ENCODE measurements at regions of chr6 and their contacts with region 1.

Region 1: GRCh38 chr6:32971581-32972352 is 3.4 kb downstream of the BRD2 start:
- DNase-seq: peak; percentile 98 to 100 (median 100)
- ATAC-seq: peak; percentile 50 to 68
- H3K4me3 Mint-ChIP-seq: peak overlapping the region; percentile 78 to 99 (median 99)
- H3K27ac Mint-ChIP-seq: peak overlapping the region; percentile 91 to 100 (median 100)
- H3K4me1 Mint-ChIP-seq: peaks cover 30 to 57% (median 44%) of the 10 kb centered on the region in 4 donors
- H3K27me3 Mint-ChIP-seq: peaks cover 0 to 2% (median 0%) of the 10 kb centered on the region in 5 donors

Region 2: DNA sequence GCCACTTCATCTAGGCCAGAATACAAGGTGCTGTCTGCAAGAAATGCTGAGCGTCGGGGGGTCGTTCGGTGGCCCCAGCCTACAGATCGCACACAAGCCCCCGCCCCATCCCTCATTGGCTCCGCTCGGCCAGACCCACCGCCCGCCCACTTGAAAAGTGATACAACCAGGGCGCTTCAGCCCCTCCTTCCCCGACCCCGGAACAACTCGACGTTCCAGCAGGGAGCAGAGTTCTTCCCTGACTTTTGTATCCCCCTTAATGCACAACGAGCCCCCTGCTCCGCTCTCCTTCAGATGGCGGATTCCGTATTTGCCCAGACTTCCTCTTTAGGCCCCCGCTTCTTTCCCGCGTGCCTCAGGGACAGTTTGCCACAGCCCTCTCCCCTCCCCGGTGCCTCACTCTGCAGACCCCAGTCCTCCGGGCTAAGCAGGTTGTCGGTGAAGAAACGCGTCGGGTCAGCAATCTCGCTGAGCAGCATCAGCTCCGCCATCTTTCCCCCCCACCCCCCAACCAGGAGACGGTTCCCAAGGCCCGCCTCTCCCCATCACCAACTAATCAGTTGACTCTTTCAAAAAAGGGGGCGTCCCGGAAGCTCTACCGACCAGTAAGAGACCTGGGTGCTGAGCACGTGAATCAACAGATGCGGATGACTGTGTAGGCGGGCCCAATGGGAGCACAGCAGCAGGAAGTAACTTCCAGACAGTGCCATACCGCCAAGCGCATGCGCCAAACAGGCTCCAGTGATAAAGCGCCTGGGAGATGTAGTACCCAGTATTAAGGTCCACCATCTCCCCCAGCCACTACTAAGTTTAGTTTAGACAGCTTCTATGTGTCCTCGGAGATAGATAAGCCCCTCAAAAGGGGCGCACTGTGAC is 843.8 kb before region 1 on chr6 and contains the start of gene ATF6B:
- POLR2A ChIA-PET with region 1: interaction called, 10 read pairs
- DNase-seq: peak; percentile 86 to 99 (median 97)
- ATAC-seq: peak; percentile 95 to 96
- H3K4me3 Mint-ChIP-seq: peak within 1 kb of the TSS; percentile 96 to 100 (median 98)
- H3K27ac Mint-ChIP-seq: peak within 1 kb of the TSS; percentile 90 to 99 (median 97)
- H3K4me1 Mint-ChIP-seq: peaks cover 26 to 62% (median 57%) of the 10 kb centered on the region in 4 donors
- H3K27me3 Mint-ChIP-seq: no peaks in the 10 kb centered on the region
- polyA plus RNA-seq, gene ATF6B: 17.5 to 25.7 (median 21.4) TPM

Region 3: DNA sequence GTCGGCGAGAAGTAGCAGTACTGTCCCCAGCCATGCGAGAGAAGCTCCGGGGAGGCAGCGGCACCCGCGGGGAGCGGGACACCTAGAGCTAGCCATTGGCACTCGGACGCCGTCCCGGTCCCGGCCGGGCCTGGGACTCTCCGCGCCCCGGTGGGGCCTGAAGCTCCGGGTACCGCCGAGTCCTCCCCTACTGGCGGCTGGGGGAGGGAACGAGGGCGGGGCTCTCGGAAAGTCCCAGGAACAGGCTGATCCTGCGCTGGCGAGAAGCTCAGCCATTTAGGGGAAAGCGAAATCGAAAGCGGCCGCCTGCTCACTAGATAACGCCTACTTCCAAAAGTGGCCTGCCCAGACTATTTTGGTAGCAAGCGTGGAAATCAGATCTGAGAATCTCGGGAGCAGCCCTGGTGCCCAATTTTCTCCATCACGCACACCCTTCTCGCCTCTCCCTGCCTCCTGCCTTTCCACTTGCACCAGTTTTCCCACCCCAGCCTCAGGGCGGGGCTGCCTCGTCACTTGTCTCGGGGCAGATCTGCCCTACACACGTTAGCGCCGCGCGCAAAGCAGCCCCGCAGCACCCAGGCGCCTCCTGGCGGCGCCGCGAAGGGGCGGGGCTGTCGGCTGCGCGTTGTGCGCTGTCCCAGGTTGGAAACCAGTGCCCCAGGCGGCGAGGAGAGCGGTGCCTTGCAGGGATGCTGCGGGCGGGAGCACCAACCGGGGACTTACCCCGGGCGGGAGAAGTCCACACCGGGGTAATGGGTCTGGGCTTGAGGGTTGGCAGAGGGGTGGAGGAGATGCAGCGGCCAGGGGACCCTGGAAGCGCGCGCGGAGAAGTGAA is 118.0 kb before region 1 on chr6 and contains the starts of genes PSMB9 and TAP1:
- POLR2A ChIA-PET with region 1: interaction called, 108 read pairs
- DNase-seq: peak; percentile 88 to 99 (median 92)
- ATAC-seq: peak; percentile 82 to 83
- H3K4me3 Mint-ChIP-seq: peak within 1 kb of the TSS; percentile 90 to 100 (median 98)
- H3K27ac Mint-ChIP-seq: peak within 1 kb of the TSS; percentile 98 to 100 (median 100)
- H3K4me1 Mint-ChIP-seq: peaks cover 46 to 76% (median 72%) of the 10 kb centered on the region in 4 donors
- H3K27me3 Mint-ChIP-seq: no peaks in the 10 kb centered on the region
- polyA plus RNA-seq, gene PSMB9: 402 to 432 (median 424) TPM
- polyA plus RNA-seq, gene TAP1: 197 to 283 (median 230) TPM

Region 4: DNA sequence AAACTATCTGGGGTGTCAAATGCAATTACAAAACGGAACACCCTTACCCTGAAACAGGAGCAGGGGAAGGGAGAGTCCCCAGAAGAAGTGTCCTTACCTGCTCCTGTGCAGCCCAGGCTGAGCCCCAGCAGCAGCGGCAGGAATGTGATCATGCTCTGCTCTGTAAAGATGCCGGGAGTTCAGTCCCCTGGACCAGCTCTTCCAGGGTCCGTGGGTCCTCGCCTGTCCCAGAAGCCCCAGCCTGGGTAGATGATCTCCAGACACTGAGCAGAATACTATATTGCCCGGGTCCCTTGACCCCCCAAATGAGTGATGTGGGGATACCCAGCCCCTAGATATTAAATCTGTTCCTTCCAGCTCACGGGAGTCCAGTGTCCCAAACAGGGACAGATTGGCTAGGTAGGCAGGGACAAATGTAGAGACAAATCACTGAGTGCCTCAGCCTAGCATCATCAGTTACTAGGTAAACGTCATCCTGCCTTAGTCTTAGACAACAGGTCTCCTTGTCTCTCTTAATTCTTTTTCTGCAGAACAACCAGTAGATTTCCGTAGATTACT is 31.0 kb before region 1 on chr6 and contains the start of gene HLA-DMB:
- POLR2A ChIA-PET with region 1: interaction called, 510 read pairs
- DNase-seq: peak in 9 of 10 donors; percentile 42 to 80 (median 63)
- ATAC-seq: peak; percentile 83 to 85
- H3K4me3 Mint-ChIP-seq: peak within 1 kb of the TSS; percentile 84 to 97 (median 94)
- H3K27ac Mint-ChIP-seq: peak within 1 kb of the TSS; percentile 88 to 98 (median 97)
- H3K4me1 Mint-ChIP-seq: peaks cover 43 to 92% (median 64%) of the 10 kb centered on the region in 4 donors
- H3K27me3 Mint-ChIP-seq: no peaks in the 10 kb centered on the region
- polyA plus RNA-seq, gene HLA-DMB: 10.8 to 22.5 (median 16.8) TPM

Region 5: GRCh38 chr6:33008944-33009861 is 37.4 kb after region 1 on chr6 and contains the start of gene HLA-DOA:
- POLR2A ChIA-PET with region 1: interaction called, 12 read pairs
- DNase-seq: peak; percentile 38 to 83 (median 70)
- ATAC-seq: peak; percentile 98
- H3K4me3 Mint-ChIP-seq: peak within 1 kb of the TSS; percentile 87 to 99 (median 96)
- H3K27ac Mint-ChIP-seq: peak within 1 kb of the TSS; percentile 90 to 98 (median 95)
- H3K4me1 Mint-ChIP-seq: peaks cover 27 to 34% (median 29%) of the 10 kb centered on the region in 4 donors
- H3K27me3 Mint-ChIP-seq: no peaks in the 10 kb centered on the region
- polyA plus RNA-seq, gene HLA-DOA: 26.4 to 61.0 (median 33.2) TPM

Region 6: DNA sequence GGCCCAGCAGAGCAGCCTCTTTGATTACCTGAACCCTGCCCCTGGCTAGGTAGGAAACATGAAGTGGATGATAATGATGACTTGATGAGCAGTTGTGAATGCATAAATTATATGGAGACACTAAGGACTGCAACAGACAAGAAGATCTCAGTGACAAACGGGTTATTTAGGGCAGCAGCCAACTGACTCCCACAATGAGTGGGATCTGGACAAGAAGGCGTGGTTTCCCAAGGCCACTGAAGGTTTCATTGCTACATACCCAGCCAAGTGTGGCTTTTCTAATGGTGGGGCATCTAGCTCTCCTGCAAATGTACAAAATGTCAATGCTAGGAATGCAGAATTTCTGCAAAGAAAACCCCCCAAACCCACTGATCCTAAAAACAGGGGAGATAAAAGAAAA is 266.0 kb after region 1 on chr6:
- POLR2A ChIA-PET with region 1: no interaction called
- DNase-seq: no peak
- ATAC-seq: no peak
- H3K4me3 Mint-ChIP-seq: no peak overlapping the region
- H3K27ac Mint-ChIP-seq: no peak overlapping the region
- H3K4me1 Mint-ChIP-seq: peaks cover 7 to 13% (median 10%) of the 10 kb centered on the region in 4 donors
- H3K27me3 Mint-ChIP-seq: peaks cover 2 to 26% (median 11%) of the 10 kb centered on the region in 5 donors

Region 7: DNA sequence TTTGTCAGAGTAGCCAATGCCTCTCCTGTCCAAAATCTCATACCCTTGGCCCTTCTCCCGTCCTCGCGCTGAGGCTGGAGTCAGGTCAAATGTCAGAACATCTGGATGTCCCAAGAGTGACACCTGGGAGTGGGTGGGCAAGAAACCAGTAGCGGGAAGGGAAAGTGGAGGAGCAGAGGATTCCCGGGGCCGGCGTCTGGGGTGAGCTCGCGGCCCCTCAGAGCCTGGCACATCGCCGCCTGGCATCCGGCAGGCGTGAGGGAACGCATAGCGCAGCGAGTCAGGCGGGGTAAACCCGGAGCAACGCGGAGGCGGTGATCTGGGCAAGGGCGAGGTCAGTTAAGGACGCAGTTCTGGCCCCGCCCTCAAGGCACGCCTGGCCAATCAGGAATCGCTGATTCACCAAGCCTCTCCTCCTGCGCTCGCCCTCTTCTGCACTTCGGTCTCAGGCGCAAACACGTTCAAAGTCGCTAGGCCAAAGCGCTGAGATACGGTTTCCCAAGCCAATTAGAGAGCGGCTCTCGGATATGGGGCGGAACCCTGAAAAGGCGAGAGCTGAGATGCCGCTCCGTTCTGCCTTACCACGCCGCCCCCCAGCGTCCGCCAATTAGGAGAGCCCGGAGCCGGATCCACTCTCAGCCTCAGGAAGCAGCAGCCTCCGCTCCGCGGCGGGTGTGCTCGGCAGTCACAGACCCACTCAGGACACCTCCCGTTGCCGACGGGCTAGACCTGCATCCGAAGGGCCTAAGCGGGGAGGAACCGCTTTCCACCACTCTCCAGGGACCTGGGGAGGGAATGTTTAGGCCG is 277.4 kb after region 1 on chr6:
- POLR2A ChIA-PET with region 1: interaction called, 35 read pairs
- DNase-seq: peak; percentile 87 to 98 (median 95)
- ATAC-seq: peak; percentile 86 to 89
- H3K4me3 Mint-ChIP-seq: peak overlapping the region; percentile 83 to 94 (median 90)
- H3K27ac Mint-ChIP-seq: peak overlapping the region; percentile 91 to 99 (median 98)
- H3K4me1 Mint-ChIP-seq: peaks cover 22 to 41% (median 38%) of the 10 kb centered on the region in 4 donors
- H3K27me3 Mint-ChIP-seq: no peaks in the 10 kb centered on the region

Region 8: GRCh38 chr6:33288921-33289748 is 317.4 kb after region 1 on chr6 and contains the starts of genes PFDN6 and WDR46:
- POLR2A ChIA-PET with region 1: interaction called, 12 read pairs
- DNase-seq: peak; percentile 53 to 91 (median 81)
- ATAC-seq: peak; percentile 96 to 97
- H3K4me3 Mint-ChIP-seq: peak within 1 kb of the TSS; percentile 87 to 100 (median 99)
- H3K27ac Mint-ChIP-seq: peak within 1 kb of the TSS; percentile 84 to 97 (median 94)
- H3K4me1 Mint-ChIP-seq: peaks cover 22 to 51% (median 48%) of the 10 kb centered on the region in 4 donors
- H3K27me3 Mint-ChIP-seq: no peaks in the 10 kb centered on the region
- polyA plus RNA-seq, gene PFDN6: 33.4 to 38.2 (median 35.5) TPM
- polyA plus RNA-seq, gene WDR46: 71.3 to 83.7 (median 74.1) TPM